ENCODE measurements at regions of chr1 and their contacts with region 1.

Region 1: DNA sequence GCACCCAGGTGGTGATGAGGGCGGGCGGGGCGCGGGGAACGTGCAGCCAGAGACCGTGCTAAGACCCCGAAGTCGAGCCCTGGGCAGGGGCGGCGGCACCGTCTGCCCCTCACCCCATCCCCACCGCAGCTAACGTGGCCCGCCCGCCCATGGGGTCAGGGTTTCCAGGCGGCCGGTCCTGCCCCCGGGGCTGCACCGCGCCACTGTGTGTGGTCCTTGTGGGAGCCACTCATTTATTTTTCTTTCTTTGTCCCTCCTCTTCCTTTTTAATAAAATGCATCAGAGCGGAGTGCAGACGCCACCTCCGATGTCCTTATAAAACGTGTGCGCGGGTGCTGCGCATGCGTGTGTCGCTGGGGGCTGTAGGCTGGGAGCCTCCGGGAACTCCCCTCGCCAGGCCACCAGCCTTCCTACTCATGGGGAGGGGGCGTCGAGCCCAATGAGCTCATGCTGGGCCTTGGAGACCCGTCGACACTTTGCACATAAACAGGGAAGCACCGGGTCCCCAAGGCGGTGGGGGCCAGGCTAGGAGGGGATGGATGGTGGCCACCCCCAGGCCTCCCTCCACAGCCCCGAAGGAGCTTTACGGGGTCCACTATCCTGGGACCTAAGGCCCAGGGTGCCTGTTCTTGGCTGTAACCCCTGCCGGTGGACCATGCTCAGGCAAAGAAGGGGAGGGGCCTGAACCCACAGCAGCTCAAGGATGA is 59.9 kb downstream of the WNT9A start:
- DNase-seq: peak; percentile 63 to 87 (median 77)
- ATAC-seq: peak; percentile 59 to 79 (median 76)
- H3K4me3 ChIP-seq: peak overlapping the region; percentile 21 to 67 (median 55)
- H3K27ac ChIP-seq: peak overlapping the region; percentile 60 to 94 (median 90)
- H3K4me1 ChIP-seq: peaks cover 0 to 32% (median 19%) of the 10 kb centered on the region in 12 donors
- H3K27me3 ChIP-seq: peaks cover 0 to 5% (median 0%) of the 10 kb centered on the region in 9 donors
- CTCF ChIP-seq: no peak
- POLR2A ChIP-seq: peak in 1 of 2 donors; percentile 39

Region 2: GRCh38 chr1:227934476-227935313 is 46.8 kb after region 1 on chr1:
- intact Hi-C with region 1: loop called in 1 of 10 experiments (anchors 2 kb)
- DNase-seq: peak in 2 of 5 donors; percentile 28 to 60
- ATAC-seq: peak; percentile 40 to 89 (median 60)
- H3K4me3 ChIP-seq: no peak overlapping the region
- H3K27ac ChIP-seq: peak overlapping the region in 8 of 12 donors; percentile 25 to 77 (median 48)
- H3K4me1 ChIP-seq: peaks cover 0 to 8% (median 0%) of the 10 kb centered on the region in 12 donors
- H3K27me3 ChIP-seq: no peaks in the 10 kb centered on the region
- CTCF ChIP-seq: no peak
- POLR2A ChIP-seq: no peak

Measured in heart left ventricle (tissue), 16 donors.